SK-N-SH (cell line): ENCODE measurements at regions of chr20 and their contacts with region 1.

Region 1: DNA sequence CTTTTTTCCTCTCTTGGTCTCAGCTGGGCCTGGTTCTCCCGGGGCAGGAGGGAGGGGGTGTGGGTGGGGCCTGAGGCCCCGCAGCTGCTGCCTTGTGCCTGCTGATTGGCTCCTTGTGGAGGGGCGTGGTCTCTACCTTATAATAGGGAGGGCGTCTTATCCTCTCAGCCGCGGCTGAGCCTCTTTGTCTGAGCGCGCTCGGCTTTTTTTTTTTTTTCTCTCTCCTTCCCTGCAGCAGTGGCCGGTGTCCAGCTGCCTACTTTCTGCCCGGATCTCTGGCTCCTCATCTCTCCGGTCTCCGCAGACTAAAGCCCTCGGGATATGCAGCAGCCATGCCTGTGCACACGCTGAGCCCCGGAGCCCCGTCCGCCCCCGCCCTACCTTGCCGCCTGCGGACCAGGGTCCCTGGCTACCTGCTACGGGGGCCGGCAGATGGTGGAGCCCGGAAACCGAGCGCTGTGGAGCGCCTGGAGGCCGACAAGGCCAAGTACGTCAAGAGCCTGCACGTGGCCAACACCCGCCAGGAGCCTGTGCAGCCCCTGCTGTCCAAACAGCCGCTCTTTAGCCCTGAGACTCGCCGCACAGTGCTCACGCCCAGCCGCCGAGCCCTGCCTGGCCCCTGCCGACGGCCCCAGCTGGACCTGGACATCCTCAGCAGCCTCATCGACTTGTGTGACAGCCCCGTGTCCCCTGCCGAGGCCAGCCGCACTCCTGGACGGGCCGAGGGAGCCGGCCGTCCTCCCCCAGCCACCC is 11.1 kb downstream of the FAM110A start:
- DNase-seq: peak; percentile 99
- H3K4me3 ChIP-seq: peak overlapping the region; percentile 50 to 65
- H3K27ac ChIP-seq: peak overlapping the region; percentile 38 to 89; a peak in 2 of 4 replicates
- H3K4me1 ChIP-seq: peaks cover 0 to 50% of the 10 kb centered on the region in 2 experiments; a peak in 1 of 4 replicates
- H3K27me3 ChIP-seq: no peaks in the 10 kb centered on the region
- CTCF ChIP-seq: no peak
- EP300 ChIP-seq: peak in 1 of 2 experiments; percentile 14; a peak in 1 of 4 replicates
- RAD21 ChIP-seq: no peak

Region 2: DNA sequence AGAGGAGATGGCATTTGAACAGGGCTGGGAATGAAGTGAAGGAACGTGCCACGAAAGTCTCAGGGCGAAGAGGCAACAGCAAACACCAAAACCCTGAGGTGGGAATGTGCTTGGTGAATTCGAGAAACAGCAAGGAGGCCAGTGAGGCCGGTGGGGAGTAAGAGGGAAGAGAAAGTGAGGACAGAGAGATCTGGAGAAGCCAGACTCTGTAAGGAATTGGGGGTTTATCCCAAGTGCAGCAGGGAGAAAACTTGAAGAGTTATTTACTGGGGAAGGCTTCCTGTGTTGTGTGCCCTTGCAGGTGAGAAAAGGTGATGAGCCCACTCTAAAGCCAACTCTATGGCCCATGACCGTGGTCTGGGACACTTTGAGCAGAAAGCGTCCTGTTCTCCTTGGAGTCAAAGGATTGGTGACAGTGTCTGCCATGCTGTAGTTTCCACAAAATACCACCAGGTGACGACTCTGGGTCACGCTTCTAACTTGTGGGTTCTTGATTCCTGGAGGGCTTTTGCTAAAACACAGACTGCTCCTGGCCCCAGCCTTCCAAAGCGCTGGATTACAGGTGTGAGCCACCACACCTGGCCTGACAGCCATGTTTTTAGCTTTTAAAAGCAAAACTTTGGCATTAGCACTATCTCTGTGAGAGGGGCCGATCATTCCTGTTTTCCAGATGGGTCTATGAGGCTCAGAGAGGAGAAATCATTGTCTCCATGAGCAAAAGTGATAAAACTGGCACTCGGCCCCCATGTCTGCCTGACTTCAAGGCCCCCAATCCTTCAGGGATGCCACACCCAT is 283.0 kb before region 1 on chr20:
- CTCF ChIA-PET with region 1: no interaction called
- POLR2A ChIA-PET with region 1: no interaction called
- DNase-seq: peak; percentile 83
- H3K4me3 ChIP-seq: no peak overlapping the region; a peak in 1 of 4 replicates
- H3K27ac ChIP-seq: no peak overlapping the region
- H3K4me1 ChIP-seq: no peaks in the 10 kb centered on the region
- H3K27me3 ChIP-seq: peaks cover 13% of the 10 kb centered on the region
- CTCF ChIP-seq: peak; percentile 94
- EP300 ChIP-seq: no peak
- RAD21 ChIP-seq: peak; percentile 95

Region 3: GRCh38 chr20:833450-834150 is 11.0 kb before region 1 on chr20 and contains the start of gene FAM110A:
- CTCF ChIA-PET with region 1: interaction called, 4 read pairs
- POLR2A ChIA-PET with region 1: interaction called, 15 read pairs
- DNase-seq: peak; percentile 95
- H3K4me3 ChIP-seq: peak within 1 kb of the TSS; percentile 67 to 85
- H3K27ac ChIP-seq: peak within 1 kb of the TSS; percentile 88 to 92
- H3K4me1 ChIP-seq: peaks cover 6 to 12% of the 10 kb centered on the region in 2 experiments; a peak in 2 of 4 replicates
- H3K27me3 ChIP-seq: no peaks in the 10 kb centered on the region
- CTCF ChIP-seq: no peak
- EP300 ChIP-seq: no peak
- RAD21 ChIP-seq: no peak
- polyA plus RNA-seq, gene FAM110A: 2.5 and 3.8 TPM in 2 replicates